GM10248 (cell line): ENCODE measurements at regions of chr19 and their contacts with region 1.

Region 1: GRCh38 chr19:246541-246940 is 44.7 kb downstream of the PLPP2 start:
- DNase-seq: no peak
- CTCF ChIP-seq: no peak

Region 2: DNA sequence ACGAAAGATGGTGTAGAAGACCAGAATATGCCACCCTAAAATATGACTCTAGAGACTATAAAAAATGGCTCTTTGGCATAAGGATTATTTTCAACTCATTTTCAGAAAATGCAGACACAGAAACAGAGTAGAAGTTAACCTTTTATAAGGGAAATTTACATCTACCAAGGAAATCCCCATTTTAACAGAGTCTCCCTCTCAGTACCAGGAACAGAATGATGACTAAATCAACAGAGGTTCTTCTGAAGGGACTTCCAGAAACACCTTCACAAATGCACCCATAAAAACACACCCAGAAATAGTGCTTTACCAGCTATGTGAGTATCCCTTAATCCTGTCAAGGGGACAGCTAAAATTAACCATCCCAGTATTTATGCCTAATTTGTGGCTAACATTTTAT is 15.6 kb after region 1 on chr19:
- CTCF ChIA-PET with region 1: interaction called, 23 read pairs
- POLR2A ChIA-PET with region 1: no interaction called
- DNase-seq: peak; percentile 30
- CTCF ChIP-seq: no peak

Region 3: GRCh38 chr19:275000-275399 is 28.5 kb after region 1 on chr19:
- CTCF ChIA-PET with region 1: interaction called, 13 read pairs
- POLR2A ChIA-PET with region 1: no interaction called
- DNase-seq: no peak
- CTCF ChIP-seq: no peak

Region 4: DNA sequence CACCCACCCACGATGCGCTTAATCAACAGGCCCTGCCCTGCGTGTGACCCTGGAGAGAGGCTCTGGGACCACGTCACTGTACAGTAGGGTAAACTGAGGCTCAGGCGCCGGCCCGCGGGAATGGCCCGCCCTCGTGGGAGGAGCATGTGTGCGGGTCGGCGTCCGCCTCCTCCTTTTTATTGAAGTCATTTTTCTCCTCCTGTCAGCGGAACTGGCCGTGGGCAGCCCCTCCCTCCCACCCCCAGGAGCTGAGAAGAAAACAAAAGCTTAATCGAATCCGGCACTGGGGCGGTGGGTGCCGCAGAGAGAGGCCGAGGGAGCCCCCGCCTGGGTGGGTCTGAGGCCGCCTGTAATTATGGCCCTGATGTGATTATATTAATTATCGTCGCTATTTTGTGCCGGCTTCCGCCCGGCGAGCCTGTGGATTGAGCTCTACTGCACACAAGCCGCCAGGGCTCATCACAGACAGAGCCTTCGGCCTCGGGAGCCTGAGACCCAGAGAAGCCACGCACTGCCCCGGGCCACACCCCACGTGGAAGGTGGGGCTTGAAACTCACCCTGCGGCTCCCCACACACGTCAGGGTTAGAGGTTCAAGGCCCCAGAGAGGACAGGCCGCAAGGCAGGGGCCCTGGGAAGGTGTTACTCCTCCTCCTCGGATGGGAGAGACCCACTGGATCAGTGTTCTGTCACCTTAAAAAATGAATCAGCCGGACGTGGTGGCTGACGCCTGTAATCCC is 155.5 kb after region 1 on chr19:
- CTCF ChIA-PET with region 1: no interaction called
- POLR2A ChIA-PET with region 1: no interaction called
- DNase-seq: no peak
- CTCF ChIP-seq: no peak